GM18951 (cell line): ENCODE measurements at regions of chr4 and their contacts with region 1.

Region 1: DNA sequence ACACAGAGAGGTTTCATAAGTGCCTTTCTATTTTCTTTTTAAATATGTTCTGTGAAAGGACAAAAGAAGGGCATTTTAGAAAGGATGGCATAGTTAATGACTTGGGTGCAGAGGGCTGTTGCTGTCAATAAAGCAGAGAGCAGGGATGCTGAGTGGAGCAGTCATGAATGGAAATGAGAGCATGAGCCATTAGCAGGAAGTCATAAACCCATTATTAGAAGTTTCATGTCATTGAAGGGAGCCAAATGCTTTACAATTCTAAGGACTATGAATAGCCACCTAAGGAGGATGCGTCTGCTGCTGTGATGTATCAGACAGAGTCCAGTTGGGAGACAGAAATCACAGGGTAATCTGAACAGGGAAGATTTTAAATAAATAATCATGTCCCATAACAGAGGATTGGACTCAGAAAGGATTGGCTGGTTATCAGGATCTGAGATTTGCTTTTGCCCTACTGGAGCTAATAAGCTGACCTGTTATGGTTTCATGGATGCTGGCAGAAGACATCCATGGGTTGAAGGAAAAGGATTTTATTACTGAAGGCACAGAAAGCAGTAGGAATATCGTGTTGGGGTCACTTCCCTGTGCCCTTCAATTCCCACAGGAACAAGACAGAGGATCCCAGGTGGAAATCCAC is 47.5 kb upstream of the WDR19 start:
- POLR2A ChIP-seq: no peak

Region 2: DNA sequence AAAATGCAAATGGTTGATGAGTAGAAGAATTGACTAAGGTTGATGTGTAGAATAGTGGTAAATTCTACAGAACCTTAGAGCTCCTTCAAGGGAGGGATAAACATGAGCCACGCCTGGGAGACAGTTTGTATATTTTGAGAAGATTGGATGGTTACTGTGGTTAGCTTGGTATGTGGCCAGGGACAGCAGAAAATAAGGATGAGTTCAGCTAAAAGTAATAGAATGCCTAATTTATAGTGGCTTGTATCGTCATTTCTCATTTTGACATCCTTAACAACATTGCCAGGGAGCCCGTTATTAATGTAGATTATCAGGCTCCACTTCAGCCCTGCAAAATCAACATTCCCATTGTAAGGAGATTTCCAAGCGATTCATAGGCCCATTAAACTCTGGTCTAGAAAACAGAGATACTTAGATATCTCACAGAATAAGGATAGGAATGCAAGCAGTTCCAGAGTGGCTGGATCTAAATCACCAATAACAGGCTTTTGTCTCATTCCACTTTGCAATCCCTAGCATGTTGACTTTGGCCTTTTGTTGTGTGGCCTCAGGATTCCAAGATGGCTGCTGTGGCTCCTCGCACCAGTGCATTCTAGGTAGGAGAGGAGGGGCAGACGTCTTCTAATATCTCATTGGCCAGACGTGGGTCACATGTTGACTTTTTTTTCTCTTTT is 1181.0 kb before region 1 on chr4:
- in situ Hi-C with region 1: no loop called
- POLR2A ChIP-seq: no peak

Region 3: DNA sequence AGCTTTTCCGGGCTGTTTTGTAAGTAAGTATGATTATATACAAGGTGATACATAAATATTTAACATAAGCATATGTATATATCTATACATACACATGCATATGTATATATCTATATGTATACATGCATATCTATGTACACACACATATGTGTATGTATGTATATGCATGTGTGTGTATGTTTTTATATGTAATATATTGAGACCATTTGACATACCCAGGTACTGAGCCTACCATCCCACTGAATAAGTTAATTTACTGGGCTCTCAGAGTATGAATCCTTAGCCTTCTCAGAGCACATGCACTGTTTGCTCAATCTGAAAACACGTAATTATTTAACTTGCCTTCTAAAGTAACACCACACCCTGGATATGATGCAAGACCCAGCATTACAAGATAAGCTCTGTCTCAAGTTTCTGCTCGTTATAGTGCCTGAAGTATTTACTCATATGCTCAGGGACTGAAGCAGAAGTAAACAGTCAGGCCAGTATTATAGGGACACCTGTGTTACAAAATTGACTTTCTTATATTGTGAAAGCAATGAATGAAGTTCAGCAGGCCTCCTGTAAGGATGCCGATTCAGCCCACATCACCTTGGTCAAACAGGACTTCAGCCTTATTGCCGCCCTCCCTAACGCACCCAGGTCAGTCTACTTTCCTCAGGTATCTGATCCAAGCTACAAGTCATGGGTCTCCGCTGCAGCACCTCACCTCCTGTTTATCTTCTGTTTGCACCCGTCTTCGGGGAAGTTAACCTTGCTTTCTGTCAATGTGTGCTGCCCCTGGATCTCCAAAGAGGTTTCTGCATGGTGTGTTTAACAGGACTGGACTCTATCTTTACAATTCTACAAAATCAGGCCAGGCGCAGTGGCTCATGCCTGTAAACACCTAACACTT is 513.8 kb before region 1 on chr4:
- in situ Hi-C with region 1: no loop called
- POLR2A ChIP-seq: no peak

Region 4: GRCh38 chr4:38759113-38759789 is 375.6 kb before region 1 on chr4:
- in situ Hi-C with region 1: loop called (anchors 10 kb)
- POLR2A ChIP-seq: no peak

Region 5: GRCh38 chr4:38896940-38897339 is 237.9 kb before region 1 on chr4:
- in situ Hi-C with region 1: loop called (anchors 5 kb)
- POLR2A ChIP-seq: no peak

Region 6: GRCh38 chr4:39255266-39255665 is 120.5 kb after region 1 on chr4:
- in situ Hi-C with region 1: no loop called
- POLR2A ChIP-seq: no peak